ENCODE measurements at regions of chr16 and their contacts with region 1.

Region 1: GRCh38 chr16:73068541-73069401 is 20.8 kb upstream of the ZFHX3 start:
- DNase-seq: peak in 3 of 4 donors; percentile 87 to 88 (median 87)
- ATAC-seq: peak; percentile 82
- H3K4me3 ChIP-seq: no peak overlapping the region
- H3K27ac ChIP-seq: peak overlapping the region; percentile 85 to 90
- H3K4me1 ChIP-seq: peaks cover 35 to 67% of the 10 kb centered on the region in 2 donors
- H3K27me3 ChIP-seq: peaks cover 0 to 51% of the 10 kb centered on the region in 2 donors
- CTCF ChIP-seq: no peak

Region 2: GRCh38 chr16:72832621-72833248 is 236.0 kb before region 1 on chr16:
- intact Hi-C with region 1: loop called in 1 of 2 experiments (anchors 10 kb)
- DNase-seq: peak in 3 of 4 donors; percentile 76 to 94 (median 81)
- ATAC-seq: peak; percentile 99
- H3K4me3 ChIP-seq: no peak overlapping the region
- H3K27ac ChIP-seq: no peak overlapping the region
- H3K4me1 ChIP-seq: no peaks in the 10 kb centered on the region
- H3K27me3 ChIP-seq: no peaks in the 10 kb centered on the region
- CTCF ChIP-seq: peak; percentile 93 to 94

Region 3: GRCh38 chr16:73166441-73166851 is 97.7 kb after region 1 on chr16:
- intact Hi-C with region 1: loop called in 1 of 2 experiments (anchors 10 kb)
- DNase-seq: no peak
- ATAC-seq: peak; percentile 77
- H3K4me3 ChIP-seq: peak overlapping the region in 1 of 2 donors; percentile 1
- H3K27ac ChIP-seq: peak overlapping the region in 1 of 2 donors; percentile 15
- H3K4me1 ChIP-seq: peaks cover 0 to 16% of the 10 kb centered on the region in 2 donors
- H3K27me3 ChIP-seq: no peaks in the 10 kb centered on the region
- CTCF ChIP-seq: no peak

Measured in left lung (tissue), 14 donors.